HepG2 (cell line): ENCODE measurements at regions of chr16 and their contacts with region 1.

Region 1: GRCh38 chr16:29961479-29962343 is at the start of gene TMEM219:
- DNase-seq: peak; percentile 81
- ATAC-seq: peak; percentile 78
- H3K4me3 ChIP-seq: peak within 1 kb of the TSS; percentile 65 to 87 (median 80)
- H3K27ac ChIP-seq: peak within 1 kb of the TSS; percentile 81
- H3K4me1 ChIP-seq: peaks cover 56% of the 10 kb centered on the region
- H3K27me3 ChIP-seq: no peaks in the 10 kb centered on the region; a peak in 1 of 5 replicates
- CTCF ChIP-seq: no peak; the same call in 1 of the 2 replicates
- EP300 ChIP-seq: no peak
- POLR2A ChIP-seq: peak; percentile 70 to 89
- RAD21 ChIP-seq: peak; percentile 71
- total RNA-seq, gene TMEM219: 64.5 and 105 TPM in 2 replicates

Region 2: GRCh38 chr16:29943846-29944669 is 17.7 kb before region 1 on chr16:
- CTCF ChIA-PET with region 1: no interaction called
- POLR2A ChIA-PET with region 1: interaction called, 30 read pairs
- in situ Hi-C with region 1: no loop called
- intact Hi-C with region 1: no loop called
- DNase-seq: peak; percentile 91
- ATAC-seq: peak; percentile 97
- H3K4me3 ChIP-seq: peak overlapping the region; percentile 39 to 51 (median 41)
- H3K27ac ChIP-seq: peak overlapping the region; percentile 62
- H3K4me1 ChIP-seq: peaks cover 38% of the 10 kb centered on the region
- H3K27me3 ChIP-seq: no peaks in the 10 kb centered on the region
- CTCF ChIP-seq: peak; percentile 41; the same call in 1 of the 2 replicates
- EP300 ChIP-seq: peak in 1 of 2 experiments; percentile 29; a peak in 2 of 4 replicates
- POLR2A ChIP-seq: peak; percentile 22 to 50; a peak in 2 of 4 replicates
- RAD21 ChIP-seq: no peak

Region 3: DNA sequence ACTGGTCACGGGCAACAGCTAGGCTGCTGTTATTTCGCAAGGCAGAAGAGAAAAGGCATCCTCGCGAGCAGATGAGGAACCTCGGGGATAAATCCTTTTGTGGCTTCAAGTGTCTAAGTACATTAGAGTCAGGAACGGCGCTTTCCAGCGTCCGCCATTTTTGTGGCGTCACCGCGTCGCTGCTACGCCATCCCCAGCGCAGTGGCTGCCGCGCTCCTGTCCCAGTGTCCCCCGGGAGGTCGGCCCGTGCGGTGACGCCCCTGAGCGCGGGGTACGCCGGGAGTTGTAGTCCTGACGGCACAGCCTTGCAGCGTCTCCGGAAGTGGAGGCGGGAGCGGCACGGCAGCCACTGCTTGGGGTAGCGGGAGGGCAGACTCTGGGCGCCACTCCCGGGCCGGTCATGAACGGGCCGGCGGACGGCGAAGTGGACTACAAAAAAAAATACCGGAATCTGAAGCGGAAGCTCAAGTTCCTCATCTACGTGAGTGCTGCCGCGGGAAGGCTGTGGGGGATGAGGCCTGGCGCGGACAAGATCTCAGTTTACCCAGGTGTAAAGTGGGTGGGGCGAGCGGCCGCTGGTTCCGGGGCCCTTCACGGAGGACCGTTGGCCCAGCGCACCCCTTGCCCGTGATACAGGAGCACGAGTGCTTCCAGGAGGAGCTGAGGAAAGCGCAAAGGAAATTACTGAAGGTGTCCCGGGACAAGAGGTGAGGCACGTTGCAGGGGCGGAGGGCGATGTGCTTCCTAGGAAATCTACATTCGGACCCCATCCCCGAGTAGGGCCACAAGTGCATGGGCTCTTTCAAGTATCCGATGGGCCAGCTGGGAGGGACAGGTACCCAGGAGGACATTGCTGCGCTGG is 34.4 kb after region 1 on chr16 and contains the start of gene INO80E:
- CTCF ChIA-PET with region 1: no interaction called
- POLR2A ChIA-PET with region 1: interaction called, 3 read pairs
- in situ Hi-C with region 1: no loop called
- intact Hi-C with region 1: loop called (anchors 5 kb)
- DNase-seq: peak; percentile 94
- ATAC-seq: peak; percentile 96
- H3K4me3 ChIP-seq: peak within 1 kb of the TSS; percentile 92 to 95 (median 94)
- H3K27ac ChIP-seq: peak within 1 kb of the TSS; percentile 87
- H3K4me1 ChIP-seq: peaks cover 24% of the 10 kb centered on the region
- H3K27me3 ChIP-seq: peaks cover 0 to 5% of the 10 kb centered on the region in 2 experiments; a peak in 1 of 5 replicates
- CTCF ChIP-seq: peak; percentile 45; the same call in 1 of the 2 replicates
- EP300 ChIP-seq: no peak
- POLR2A ChIP-seq: peak; percentile 79 to 82
- RAD21 ChIP-seq: peak; percentile 44; the same call in 1 of the 2 replicates
- total RNA-seq, gene INO80E: 39.5 and 45.6 TPM in 2 replicates